Activated CD4-positive, alpha-beta T cell treated with anti-CD3 and anti-CD28 coated beads, Interleukin-2, amount 10 ng/mL, durations not matched to agents 24 days and 14 days (primary cell): ENCODE measurements at regions of chr1 and their contacts with region 1.

Region 1: GRCh38 chr1:54715493-54716298 is at the start of gene TTC4:
- DNase-seq: peak; percentile 96
- H3K4me3 Mint-ChIP-seq: peak within 1 kb of the TSS; percentile 96
- H3K27ac Mint-ChIP-seq: peak within 1 kb of the TSS; percentile 93
- H3K4me1 Mint-ChIP-seq: peaks cover 23% of the 10 kb centered on the region
- H3K27me3 Mint-ChIP-seq: peaks cover 5% of the 10 kb centered on the region
- total RNA-seq, gene TTC4: 41.6 and 45.3 TPM in 2 replicates

Region 2: GRCh38 chr1:54199765-54200518 is 515.8 kb before region 1 on chr1 and contains the starts of genes CYB5RL and MRPL37:
- intact Hi-C with region 1: loop called (anchors 1 kb)
- DNase-seq: peak; percentile 98
- H3K4me3 Mint-ChIP-seq: peak within 1 kb of the TSS; percentile 88
- H3K27ac Mint-ChIP-seq: peak within 1 kb of the TSS; percentile 73
- H3K4me1 Mint-ChIP-seq: peaks cover 29% of the 10 kb centered on the region
- H3K27me3 Mint-ChIP-seq: no peaks in the 10 kb centered on the region
- total RNA-seq, gene CYB5RL: 10.1 and 11.3 TPM in 2 replicates
- total RNA-seq, gene MRPL37: 158 and 162 TPM in 2 replicates

Region 3: DNA sequence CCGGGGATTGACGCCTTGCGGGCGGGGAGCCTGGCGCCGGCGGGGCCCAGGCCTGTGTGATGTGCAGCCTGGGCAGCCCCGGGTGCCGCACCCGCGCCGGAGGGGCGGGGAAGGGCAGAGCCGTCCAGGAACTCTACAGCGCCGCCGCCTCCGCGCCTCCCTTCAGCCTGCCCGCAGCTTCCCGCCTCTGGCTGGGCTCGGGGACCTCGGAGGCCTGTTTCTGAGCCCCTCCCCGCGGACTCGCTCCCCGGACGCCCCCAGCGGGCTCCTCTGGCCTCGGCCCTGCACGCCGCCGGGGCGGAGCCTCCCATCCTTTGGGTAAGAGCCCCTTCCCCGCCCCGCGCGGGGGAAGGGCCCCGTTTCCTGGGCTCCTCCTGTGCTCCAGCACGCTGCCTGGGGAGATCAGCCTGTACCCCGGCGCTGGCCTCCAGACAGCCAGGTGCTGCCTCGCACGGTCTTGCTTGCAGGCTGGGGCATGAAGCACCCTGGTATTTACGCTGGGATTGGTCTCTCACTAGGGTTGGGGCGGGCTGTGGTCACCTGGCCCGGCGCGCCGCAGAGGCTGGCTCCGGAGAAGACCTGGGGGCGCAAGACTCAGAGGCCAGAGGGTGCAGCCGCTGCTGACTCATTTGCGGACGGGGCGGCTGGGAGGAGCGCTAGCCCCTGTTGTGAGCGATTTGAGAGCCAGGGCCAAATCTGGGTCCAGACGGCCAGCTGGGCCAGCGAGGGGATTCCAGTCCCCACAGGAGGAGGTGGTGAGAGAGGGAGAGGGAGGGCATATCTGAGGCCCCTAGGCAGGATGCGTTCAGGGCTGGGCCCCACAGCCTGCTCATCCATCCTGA is 173.4 kb before region 1 on chr1:
- intact Hi-C with region 1: loop called (anchors 2 kb)
- DNase-seq: peak; percentile 89
- H3K4me3 Mint-ChIP-seq: peak overlapping the region; percentile 80
- H3K27ac Mint-ChIP-seq: peak overlapping the region; percentile 18
- H3K4me1 Mint-ChIP-seq: peaks cover 13% of the 10 kb centered on the region
- H3K27me3 Mint-ChIP-seq: peaks cover 11% of the 10 kb centered on the region

Region 4: GRCh38 chr1:54645806-54646676 is 69.7 kb before region 1 on chr1:
- intact Hi-C with region 1: no loop called
- DNase-seq: no peak
- H3K4me3 Mint-ChIP-seq: no peak overlapping the region
- H3K27ac Mint-ChIP-seq: no peak overlapping the region
- H3K4me1 Mint-ChIP-seq: no peaks in the 10 kb centered on the region
- H3K27me3 Mint-ChIP-seq: peaks cover 13% of the 10 kb centered on the region

Region 5: GRCh38 chr1:54764133-54764921 is 48.6 kb after region 1 on chr1 and contains the start of gene PARS2:
- intact Hi-C with region 1: loop called (anchors 1 kb)
- DNase-seq: peak; percentile 99
- H3K4me3 Mint-ChIP-seq: peak within 1 kb of the TSS; percentile 93
- H3K27ac Mint-ChIP-seq: peak within 1 kb of the TSS; percentile 94
- H3K4me1 Mint-ChIP-seq: peaks cover 11% of the 10 kb centered on the region
- H3K27me3 Mint-ChIP-seq: no peaks in the 10 kb centered on the region
- total RNA-seq, gene PARS2: 7.1 and 7.8 TPM in 2 replicates

Region 6: DNA sequence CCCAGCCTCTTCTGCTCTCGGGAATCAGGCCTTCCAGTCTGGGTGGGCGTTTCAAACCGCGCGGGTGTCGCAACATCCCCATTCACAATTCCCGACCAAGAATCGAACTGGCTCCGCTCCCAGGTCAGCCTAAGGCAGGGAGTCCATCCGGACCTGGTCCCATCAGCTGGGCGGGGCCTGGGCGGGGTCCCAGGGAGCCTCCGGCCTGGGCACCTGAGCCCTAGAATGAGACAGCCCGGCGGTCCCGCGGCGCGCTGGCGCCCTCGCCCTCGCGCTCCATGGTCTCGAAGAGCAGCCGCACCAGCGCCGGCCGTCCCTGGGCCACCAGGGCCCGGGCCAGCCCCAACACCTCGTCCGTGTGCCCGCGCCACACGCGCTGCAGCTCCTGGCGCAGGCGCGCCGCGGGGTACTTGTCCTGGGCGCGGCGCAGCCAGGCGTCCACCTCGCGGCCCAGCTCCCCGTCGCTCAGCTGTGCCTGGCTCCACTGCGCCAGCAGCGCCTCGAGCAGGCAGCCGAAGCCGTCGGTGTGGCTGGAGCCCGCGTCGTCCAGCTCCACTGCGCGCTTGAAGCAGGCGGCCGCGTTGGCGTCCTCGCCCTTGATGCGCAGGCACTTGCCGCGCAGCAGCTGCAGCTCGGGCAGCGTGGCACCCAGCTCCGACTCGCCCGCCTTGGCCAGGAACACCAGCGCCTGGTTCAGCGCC is 65.5 kb after region 1 on chr1:
- intact Hi-C with region 1: no loop called
- DNase-seq: no peak
- H3K4me3 Mint-ChIP-seq: no peak overlapping the region
- H3K27ac Mint-ChIP-seq: no peak overlapping the region
- H3K4me1 Mint-ChIP-seq: no peaks in the 10 kb centered on the region
- H3K27me3 Mint-ChIP-seq: no peaks in the 10 kb centered on the region

Region 7: DNA sequence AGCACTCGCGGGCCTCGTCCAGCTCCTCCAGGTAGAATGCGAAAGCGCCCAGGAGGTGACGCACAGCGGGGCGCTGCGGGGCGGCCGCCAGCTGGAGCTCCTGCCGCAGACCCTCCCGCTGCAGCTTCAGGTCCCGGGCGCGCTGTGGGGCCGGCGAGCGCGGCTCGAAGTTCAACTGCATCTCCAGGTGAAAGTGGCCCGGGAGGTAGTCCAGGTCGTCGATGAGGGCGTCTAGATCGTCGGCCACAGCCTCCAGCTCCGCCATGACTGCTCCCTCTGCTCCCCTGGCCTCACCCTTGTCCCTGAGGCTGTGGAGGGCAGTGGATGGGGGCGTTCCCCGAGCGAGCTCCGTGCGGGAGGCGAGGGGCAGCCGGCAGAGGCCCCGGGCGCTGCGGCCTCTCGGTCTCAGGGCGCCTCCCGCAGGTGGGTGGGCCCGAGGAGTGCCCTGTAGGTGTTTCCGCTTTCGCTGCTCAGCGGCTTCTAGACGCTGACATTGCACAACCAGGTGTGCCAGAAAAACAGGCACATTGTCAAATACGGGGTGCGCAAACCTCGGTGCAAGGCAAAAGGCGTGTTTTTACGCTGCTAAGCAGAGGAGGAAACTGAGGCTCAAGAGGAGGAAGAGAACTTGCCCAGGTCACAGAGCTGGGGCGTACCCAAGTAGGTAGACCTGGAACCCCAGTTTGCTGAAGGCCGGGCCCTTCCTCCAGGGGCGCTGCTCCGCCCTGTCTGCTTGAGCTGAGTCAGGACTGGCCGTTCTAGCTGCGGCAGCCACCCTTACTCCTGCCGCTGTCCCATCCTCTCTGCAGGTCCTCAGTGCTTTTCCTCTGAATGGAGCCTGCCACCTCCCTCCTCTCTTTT is 85.4 kb after region 1 on chr1 and contains the start of gene TTC22:
- intact Hi-C with region 1: loop called (anchors 2 kb)
- DNase-seq: peak; percentile 91
- H3K4me3 Mint-ChIP-seq: peak within 1 kb of the TSS; percentile 87
- H3K27ac Mint-ChIP-seq: peak within 1 kb of the TSS; percentile 81
- H3K4me1 Mint-ChIP-seq: peaks cover 54% of the 10 kb centered on the region
- H3K27me3 Mint-ChIP-seq: no peaks in the 10 kb centered on the region
- total RNA-seq, gene TTC22: 1.6 TPM in 2 replicates

Region 8: GRCh38 chr1:54886724-54887664 is 171.3 kb after region 1 on chr1 and contains the start of gene DHCR24:
- intact Hi-C with region 1: loop called (anchors 2 kb)
- DNase-seq: peak; percentile 96
- H3K4me3 Mint-ChIP-seq: peak within 1 kb of the TSS; percentile 99
- H3K27ac Mint-ChIP-seq: peak within 1 kb of the TSS; percentile 96
- H3K4me1 Mint-ChIP-seq: peaks cover 55% of the 10 kb centered on the region
- H3K27me3 Mint-ChIP-seq: peaks cover 9% of the 10 kb centered on the region
- total RNA-seq, gene DHCR24: 207 and 211 TPM in 2 replicates